Heart left ventricle (tissue), 16 donors: ENCODE measurements at regions of chr15 and their contacts with region 1.

Region 1: DNA sequence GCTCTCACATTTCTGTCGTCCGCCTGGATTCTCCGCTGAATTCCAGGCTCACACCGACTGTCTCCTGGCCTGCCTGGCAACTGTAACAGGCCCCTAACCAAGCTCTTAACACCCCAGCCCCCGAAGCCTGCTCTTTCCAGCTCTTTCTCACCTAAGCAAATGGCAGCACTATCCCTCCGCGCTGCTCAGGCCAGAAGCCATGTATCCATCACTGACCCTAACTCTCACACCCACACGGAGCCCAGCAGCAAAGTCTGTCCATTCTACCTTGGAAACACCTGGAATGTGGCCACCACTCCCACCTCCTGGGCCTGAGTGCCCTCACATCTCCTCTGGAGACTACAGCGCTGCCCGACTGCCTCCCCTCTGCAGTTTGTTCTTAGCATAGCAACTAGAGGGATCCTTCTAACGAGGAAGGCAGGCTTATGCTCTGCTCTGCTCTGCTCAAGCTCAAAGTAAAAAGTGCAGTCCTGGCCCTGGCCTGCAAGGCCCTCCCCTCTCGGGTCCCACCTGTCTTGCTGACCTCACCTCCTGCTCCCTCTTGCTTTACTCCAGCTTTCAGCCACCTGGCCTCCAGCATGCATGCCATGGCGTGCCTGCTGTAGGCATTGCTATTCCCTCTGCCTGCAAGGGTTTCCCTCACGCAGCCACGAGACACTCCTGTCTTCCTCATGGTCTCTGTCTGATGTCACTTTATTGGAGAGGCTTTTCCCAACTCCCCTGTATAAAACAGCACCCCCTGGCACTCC is 27.2 kb downstream of the FEM1B start:
- DNase-seq: peak in 1 of 5 donors; percentile 14
- ATAC-seq: no peak
- H3K4me3 ChIP-seq: no peak overlapping the region
- H3K27ac ChIP-seq: no peak overlapping the region
- H3K4me1 ChIP-seq: peaks cover 0 to 25% (median 7%) of the 10 kb centered on the region in 12 donors
- H3K27me3 ChIP-seq: no peaks in the 10 kb centered on the region
- CTCF ChIP-seq: no peak
- POLR2A ChIP-seq: no peak

Region 2: GRCh38 chr15:68252925-68253534 is 51.7 kb before region 1 on chr15:
- intact Hi-C with region 1: loop called in 9 of 10 experiments (anchors 1 to 5 kb)
- DNase-seq: no peak
- ATAC-seq: peak in 3 of 4 donors; percentile 29 to 45 (median 40)
- H3K4me3 ChIP-seq: no peak overlapping the region
- H3K27ac ChIP-seq: peak overlapping the region in 1 of 12 donors; percentile 2
- H3K4me1 ChIP-seq: peaks cover 0 to 19% (median 5%) of the 10 kb centered on the region in 12 donors
- H3K27me3 ChIP-seq: no peaks in the 10 kb centered on the region
- CTCF ChIP-seq: peak; percentile 80 to 93 (median 87)
- POLR2A ChIP-seq: no peak

Region 3: DNA sequence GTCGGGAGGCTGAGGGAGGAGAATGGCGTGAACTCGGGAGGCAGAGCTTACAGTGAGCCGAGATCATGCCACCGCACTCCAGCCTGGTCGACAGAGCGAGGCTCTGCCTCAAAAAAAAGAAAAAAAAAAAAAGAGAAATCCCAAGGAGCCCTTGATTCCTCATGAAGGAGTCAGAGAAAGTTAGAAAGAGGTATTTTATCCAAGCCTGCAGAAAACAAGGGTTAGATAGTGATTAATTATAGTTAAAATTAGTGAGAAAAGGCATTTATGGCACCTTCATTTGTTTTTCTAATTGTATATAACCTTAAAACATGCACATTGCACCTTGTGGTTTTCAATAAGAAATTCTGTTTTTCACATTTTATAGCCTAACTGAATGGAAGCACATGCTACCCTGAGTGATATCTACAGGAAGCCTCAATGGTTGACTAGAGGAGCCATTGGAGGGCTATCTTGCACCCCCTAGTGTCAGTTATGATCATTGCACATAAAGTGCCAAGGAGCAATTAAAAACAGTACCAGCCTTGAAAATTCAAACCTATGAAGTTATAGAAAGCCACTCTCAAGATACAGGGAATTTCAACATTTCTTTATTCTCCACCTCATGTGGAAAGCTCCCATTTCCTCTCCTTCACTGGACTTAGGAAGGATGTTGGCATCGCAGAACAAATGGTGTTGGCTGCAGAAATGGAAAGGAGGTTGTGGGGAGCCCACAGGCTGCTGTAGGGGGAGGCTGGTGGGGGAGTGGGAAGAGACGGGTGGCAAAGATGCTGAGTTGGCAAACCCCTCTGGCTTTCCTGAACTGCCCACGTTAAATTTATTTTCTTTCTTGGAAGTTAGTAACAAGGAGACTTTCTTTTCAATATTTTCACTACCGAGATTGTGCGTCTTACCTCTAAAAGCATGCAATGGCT is 78.7 kb after region 1 on chr15:
- intact Hi-C with region 1: loop called (anchors 1 to 2 kb)
- DNase-seq: peak in 2 of 5 donors; percentile 9 to 25
- ATAC-seq: peak in 3 of 4 donors; percentile 53 to 67 (median 64)
- H3K4me3 ChIP-seq: no peak overlapping the region
- H3K27ac ChIP-seq: no peak overlapping the region
- H3K4me1 ChIP-seq: peaks cover 0 to 15% (median 0%) of the 10 kb centered on the region in 12 donors
- H3K27me3 ChIP-seq: peaks cover 0 to 2% (median 0%) of the 10 kb centered on the region in 9 donors
- CTCF ChIP-seq: peak; percentile 71 to 87 (median 80)
- POLR2A ChIP-seq: no peak

Region 4: GRCh38 chr15:68543165-68544008 is 238.6 kb after region 1 on chr15:
- intact Hi-C with region 1: loop called in 2 of 10 experiments (anchors 2 to 10 kb)
- DNase-seq: peak in 4 of 5 donors; percentile 71 to 86 (median 79)
- ATAC-seq: peak; percentile 91 to 97 (median 96)
- H3K4me3 ChIP-seq: no peak overlapping the region
- H3K27ac ChIP-seq: peak overlapping the region in 10 of 12 donors; percentile 37 to 79 (median 58)
- H3K4me1 ChIP-seq: peaks cover 0 to 19% (median 13%) of the 10 kb centered on the region in 12 donors
- H3K27me3 ChIP-seq: no peaks in the 10 kb centered on the region
- CTCF ChIP-seq: no peak
- POLR2A ChIP-seq: no peak

Region 5: DNA sequence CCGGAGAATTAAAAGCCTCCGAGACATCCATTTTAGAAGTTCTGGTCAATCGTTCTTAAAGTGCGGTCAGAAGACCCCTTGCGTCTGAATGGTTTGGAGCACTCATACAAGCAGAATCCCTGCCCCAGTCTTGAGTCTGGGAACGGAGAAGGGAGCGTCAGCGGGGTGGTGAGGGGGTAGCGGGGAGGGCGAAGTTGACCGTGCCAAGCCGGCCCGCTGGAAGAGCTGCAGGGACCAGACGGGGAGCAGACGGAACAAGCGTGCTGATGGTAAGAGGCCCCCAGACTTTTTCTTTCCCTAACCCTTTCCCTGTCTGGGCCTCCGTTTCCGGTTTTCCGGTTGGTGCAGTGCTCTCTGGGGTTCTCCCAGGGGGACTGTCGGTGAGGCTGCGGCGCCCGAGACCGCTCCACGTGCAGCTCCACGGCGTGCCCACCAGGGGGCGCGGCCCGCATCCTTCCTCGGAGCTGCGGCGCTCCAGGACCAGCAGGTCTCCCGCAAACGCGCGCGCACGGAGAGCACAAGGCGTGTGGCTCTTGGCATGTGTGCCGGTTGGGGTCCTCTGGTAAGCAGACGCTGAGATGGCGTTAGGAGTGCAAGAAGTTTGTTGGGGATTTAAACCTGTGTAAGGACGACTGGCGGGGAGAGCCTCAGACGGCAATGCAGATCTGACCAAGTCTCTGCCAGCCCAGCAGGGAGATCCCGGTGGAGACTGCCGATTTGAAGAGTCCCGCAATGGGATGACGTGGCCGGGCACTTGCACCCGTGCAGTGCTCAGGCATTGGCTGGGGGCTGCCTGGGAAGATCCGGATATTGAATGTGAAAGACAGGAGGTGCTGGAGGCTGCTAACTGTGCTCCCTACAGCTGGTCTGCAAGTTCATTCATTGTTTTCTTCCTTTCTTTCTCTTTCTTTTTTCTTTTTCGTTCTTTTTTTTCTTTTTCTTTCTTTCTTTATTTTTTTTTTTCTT is 254.9 kb after region 1 on chr15:
- intact Hi-C with region 1: loop called in 6 of 10 experiments (anchors 5 to 10 kb)
- DNase-seq: peak; percentile 78 to 92 (median 81)
- ATAC-seq: peak; percentile 81 to 95 (median 94)
- H3K4me3 ChIP-seq: peak overlapping the region in 11 of 12 donors; percentile 26 to 66 (median 52)
- H3K27ac ChIP-seq: peak overlapping the region in 2 of 12 donors; percentile 15 to 17
- H3K4me1 ChIP-seq: peaks cover 0 to 19% (median 9%) of the 10 kb centered on the region in 12 donors
- H3K27me3 ChIP-seq: peaks cover 0 to 10% (median 0%) of the 10 kb centered on the region in 9 donors
- CTCF ChIP-seq: peak; percentile 93 to 99 (median 97)
- POLR2A ChIP-seq: no peak

Region 6: GRCh38 chr15:68672781-68673205 is 368.0 kb after region 1 on chr15:
- intact Hi-C with region 1: loop called in 4 of 10 experiments (anchors 2 to 10 kb)
- DNase-seq: no peak
- ATAC-seq: no peak
- H3K4me3 ChIP-seq: no peak overlapping the region
- H3K27ac ChIP-seq: no peak overlapping the region
- H3K4me1 ChIP-seq: peaks cover 0 to 34% (median 10%) of the 10 kb centered on the region in 12 donors
- H3K27me3 ChIP-seq: no peaks in the 10 kb centered on the region
- CTCF ChIP-seq: peak in 3 of 12 donors; percentile 19 to 32 (median 20)
- POLR2A ChIP-seq: no peak